ENCODE measurements at regions of chr11 and their contacts with region 1.

Region 1: GRCh38 chr11:118530408-118531339 is at the start of gene TMEM25:
- DNase-seq: peak; percentile 50 to 73
- ATAC-seq: peak; percentile 82 to 88 (median 84)
- H3K4me3 ChIP-seq: peak within 1 kb of the TSS; percentile 60 to 89 (median 80)
- H3K27ac ChIP-seq: peak within 1 kb of the TSS in 9 of 10 donors; percentile 57 to 72 (median 70)
- H3K4me1 ChIP-seq: peaks cover 4 to 25% (median 17%) of the 10 kb centered on the region in 9 donors
- H3K27me3 ChIP-seq: peaks cover 0 to 14% (median 0%) of the 10 kb centered on the region in 7 donors
- CTCF ChIP-seq: no peak
- total RNA-seq, gene TMEM25: 10.2 to 16.2 (median 11.5) TPM

Region 2: DNA sequence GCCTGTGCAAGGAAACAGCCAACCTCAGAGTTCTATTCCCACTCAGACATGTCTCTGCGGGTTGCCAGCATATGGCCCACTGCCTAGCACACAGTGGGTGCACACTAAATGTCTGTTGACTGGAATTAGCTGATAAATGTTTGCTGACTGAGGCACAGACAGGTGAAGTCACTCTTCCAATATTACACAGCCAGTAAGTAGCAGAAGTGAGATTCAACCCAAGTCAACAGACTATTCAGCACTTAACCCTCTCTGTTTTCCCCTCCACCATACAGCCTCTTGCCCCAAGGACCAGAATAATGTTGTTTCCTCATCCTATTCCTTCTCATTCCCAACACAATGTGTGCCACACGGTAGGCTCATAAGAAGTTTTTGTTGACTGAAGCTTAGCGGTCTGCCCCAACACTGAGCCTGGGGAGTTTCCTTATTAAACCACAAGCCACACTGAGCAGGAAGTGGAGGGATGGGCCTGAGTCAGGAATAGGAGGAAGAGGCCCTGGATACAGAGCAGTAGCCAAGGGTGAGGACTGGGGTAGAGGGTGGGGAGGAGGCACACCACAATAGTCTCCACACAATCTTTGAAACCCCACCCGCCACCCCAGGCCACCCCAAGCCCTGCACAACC is 560.2 kb before region 1 on chr11:
- intact Hi-C with region 1: no loop called
- DNase-seq: no peak
- ATAC-seq: peak; percentile 40 to 82 (median 72)
- H3K4me3 ChIP-seq: no peak overlapping the region
- H3K27ac ChIP-seq: peak overlapping the region in 1 of 10 donors; percentile 80
- H3K4me1 ChIP-seq: peaks cover 0 to 64% (median 0%) of the 10 kb centered on the region in 9 donors
- H3K27me3 ChIP-seq: peaks cover 0 to 14% (median 0%) of the 10 kb centered on the region in 7 donors
- CTCF ChIP-seq: no peak

Region 3: DNA sequence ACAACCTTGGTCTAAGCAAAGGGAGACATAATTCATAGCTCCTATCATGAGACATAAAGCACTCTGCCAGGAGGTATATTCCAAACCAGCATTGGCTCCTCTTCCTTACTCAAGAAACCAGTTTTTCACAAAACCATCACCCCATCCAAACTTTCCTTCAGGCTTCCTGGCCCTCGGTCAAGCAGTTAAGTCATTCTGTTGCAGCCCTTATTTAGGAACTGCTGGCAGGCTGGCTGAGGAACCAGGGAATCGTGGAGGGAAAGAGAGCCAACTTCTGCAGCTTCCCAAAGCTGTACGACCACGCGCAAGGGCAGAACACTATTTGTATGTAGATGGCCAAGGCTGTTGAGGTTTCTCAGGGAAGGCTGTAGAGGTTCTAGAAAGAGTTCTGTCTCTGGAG is 34.4 kb after region 1 on chr11:
- intact Hi-C with region 1: loop called in 1 of 10 experiments (anchors 5 kb)
- DNase-seq: peak; percentile 19 to 21
- ATAC-seq: peak; percentile 18 to 56 (median 36)
- H3K4me3 ChIP-seq: peak overlapping the region in 8 of 10 donors; percentile 46 to 75 (median 65)
- H3K27ac ChIP-seq: peak overlapping the region in 6 of 10 donors; percentile 71 to 84 (median 82)
- H3K4me1 ChIP-seq: peaks cover 0 to 17% (median 7%) of the 10 kb centered on the region in 9 donors
- H3K27me3 ChIP-seq: no peaks in the 10 kb centered on the region
- CTCF ChIP-seq: no peak

Region 4: GRCh38 chr11:118610804-118611795 is 80.4 kb after region 1 on chr11:
- intact Hi-C with region 1: no loop called
- DNase-seq: peak; percentile 86
- ATAC-seq: peak; percentile 32 to 55 (median 47)
- H3K4me3 ChIP-seq: peak overlapping the region; percentile 60 to 97 (median 74)
- H3K27ac ChIP-seq: peak overlapping the region; percentile 91 to 99 (median 94)
- H3K4me1 ChIP-seq: peaks cover 3 to 81% (median 37%) of the 10 kb centered on the region in 9 donors
- H3K27me3 ChIP-seq: peaks cover 0 to 56% (median 0%) of the 10 kb centered on the region in 7 donors
- CTCF ChIP-seq: peak; percentile 88 to 98 (median 93)